ENCODE measurements at regions of chr10 and their contacts with region 1.

Region 1: GRCh38 chr10:91251430-91252056 is 31.1 kb downstream of the PCGF5 start:
- DNase-seq: peak; percentile 54
- ATAC-seq: 0 out of 3 replicates have a peak, but pooled peaks have one; percentile 46
- H3K4me3 ChIP-seq: no peak overlapping the region
- H3K27ac ChIP-seq: no peak overlapping the region
- H3K4me1 ChIP-seq: peaks cover 3% of the 10 kb centered on the region
- H3K27me3 ChIP-seq: no peaks in the 10 kb centered on the region
- CTCF ChIP-seq: peak; percentile 81
- EP300 ChIP-seq: no peak
- POLR2A ChIP-seq: no peak
- RAD21 ChIP-seq: peak; percentile 86

Region 2: DNA sequence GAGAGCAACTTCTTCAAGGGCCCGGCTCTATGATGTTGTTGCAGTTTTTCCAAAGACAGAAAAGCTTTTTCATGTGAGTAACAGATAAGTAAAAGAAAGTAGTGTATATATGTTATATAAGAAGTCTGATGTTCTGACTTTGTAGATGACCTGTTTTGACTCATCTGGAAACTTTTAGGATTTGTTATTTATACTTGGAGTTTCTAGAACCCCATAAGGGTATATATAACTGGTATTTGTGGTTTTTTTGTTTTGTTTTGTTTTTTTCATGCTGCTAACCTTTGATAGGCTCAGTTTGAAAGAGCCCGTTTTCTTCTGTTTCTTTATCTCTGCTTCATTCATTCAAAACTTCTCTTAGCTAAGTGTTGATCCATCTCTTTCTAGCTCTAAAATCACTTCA is 372.5 kb before region 1 on chr10:
- CTCF ChIA-PET with region 1: interaction called, 7 read pairs
- POLR2A ChIA-PET with region 1: no interaction called
- in situ Hi-C with region 1: no loop called
- intact Hi-C with region 1: loop called (anchors 1 kb)
- DNase-seq: no peak
- ATAC-seq: no peak
- H3K4me3 ChIP-seq: no peak overlapping the region
- H3K27ac ChIP-seq: no peak overlapping the region
- H3K4me1 ChIP-seq: peaks cover 6% of the 10 kb centered on the region
- H3K27me3 ChIP-seq: no peaks in the 10 kb centered on the region
- CTCF ChIP-seq: no peak
- EP300 ChIP-seq: no peak
- POLR2A ChIP-seq: no peak
- RAD21 ChIP-seq: no peak

Region 3: GRCh38 chr10:91006001-91006751 is 245.4 kb before region 1 on chr10:
- CTCF ChIA-PET with region 1: interaction called, 24 read pairs
- POLR2A ChIA-PET with region 1: no interaction called
- in situ Hi-C with region 1: no loop called
- intact Hi-C with region 1: loop called (anchors 1 kb)
- DNase-seq: peak; percentile 71
- ATAC-seq: peak; percentile 89
- H3K4me3 ChIP-seq: no peak overlapping the region
- H3K27ac ChIP-seq: no peak overlapping the region
- H3K4me1 ChIP-seq: peaks cover 14% of the 10 kb centered on the region
- H3K27me3 ChIP-seq: no peaks in the 10 kb centered on the region
- CTCF ChIP-seq: peak; percentile 88
- EP300 ChIP-seq: no peak
- POLR2A ChIP-seq: no peak
- RAD21 ChIP-seq: peak; percentile 73; the same call in 1 of the 2 replicates

Region 4: GRCh38 chr10:91088300-91089140 is 163.0 kb before region 1 on chr10:
- CTCF ChIA-PET with region 1: interaction called, 23 read pairs
- POLR2A ChIA-PET with region 1: no interaction called
- in situ Hi-C with region 1: loop called (anchors 5 kb)
- intact Hi-C with region 1: loop called (anchors 1 kb)
- DNase-seq: peak; percentile 30
- ATAC-seq: peak; percentile 86
- H3K4me3 ChIP-seq: no peak overlapping the region
- H3K27ac ChIP-seq: no peak overlapping the region
- H3K4me1 ChIP-seq: no peaks in the 10 kb centered on the region
- H3K27me3 ChIP-seq: no peaks in the 10 kb centered on the region
- CTCF ChIP-seq: peak; percentile 61
- EP300 ChIP-seq: no peak
- POLR2A ChIP-seq: no peak
- RAD21 ChIP-seq: no peak

Region 5: DNA sequence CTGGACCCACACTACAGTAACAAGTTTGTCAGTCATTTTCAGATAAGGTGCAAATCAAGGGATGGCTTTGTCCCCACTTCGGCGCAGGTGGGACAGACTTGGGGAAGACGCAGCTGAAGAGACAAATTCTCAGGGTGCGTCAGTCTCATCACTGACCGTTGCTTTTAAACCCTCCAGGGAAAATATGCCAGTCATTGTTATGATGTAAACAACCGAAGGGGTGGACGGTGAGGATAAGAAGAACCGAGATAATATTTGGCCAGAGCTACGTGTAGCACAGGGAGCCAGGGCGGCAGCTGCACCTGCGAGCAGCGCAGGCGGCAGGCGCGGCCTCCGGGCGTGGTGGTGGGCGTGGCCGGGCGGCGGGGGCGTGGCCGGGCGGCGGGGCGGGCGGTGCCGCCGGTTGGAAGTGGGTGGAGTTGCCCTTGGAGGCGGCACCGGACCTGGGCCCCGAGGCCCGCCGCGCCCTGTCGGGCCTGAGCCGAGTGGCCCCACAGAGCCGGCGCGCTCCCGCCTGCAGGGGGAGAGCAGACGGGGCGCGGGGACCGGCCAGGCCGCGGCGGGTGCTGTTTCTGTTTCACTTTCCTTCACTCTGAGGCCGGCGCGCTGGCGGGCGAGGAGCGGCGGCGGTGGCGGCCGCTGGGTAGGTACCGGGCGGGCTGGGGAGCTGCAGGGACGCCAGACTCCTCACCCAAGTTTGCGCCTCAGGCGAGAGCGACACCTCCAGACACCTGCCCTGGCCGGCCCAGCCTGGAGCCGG is 31.2 kb before region 1 on chr10 and contains the start of gene PCGF5:
- CTCF ChIA-PET with region 1: no interaction called
- POLR2A ChIA-PET with region 1: interaction called, 4 read pairs
- in situ Hi-C with region 1: no loop called
- intact Hi-C with region 1: loop called (anchors 2 kb)
- DNase-seq: no peak
- ATAC-seq: peak; percentile 94
- H3K4me3 ChIP-seq: peak within 1 kb of the TSS; percentile 90 to 96 (median 90)
- H3K27ac ChIP-seq: peak within 1 kb of the TSS; percentile 100
- H3K4me1 ChIP-seq: peaks cover 78% of the 10 kb centered on the region
- H3K27me3 ChIP-seq: no peaks in the 10 kb centered on the region
- CTCF ChIP-seq: peak; percentile 39; the same call in 1 of the 2 replicates
- EP300 ChIP-seq: no peak
- POLR2A ChIP-seq: peak; percentile 79 to 81
- RAD21 ChIP-seq: peak; percentile 76
- total RNA-seq, gene PCGF5: 61.3 and 74.8 TPM in 2 replicates

Measured in HepG2 (cell line).